Activated naive CD4-positive, alpha-beta T cell treated with anti-CD3 and anti-CD28 coated beads, Interleukin-2, amount 10 ng/mL, durations not matched to agents 7 days and 5 days (primary cell): ENCODE measurements at regions of chr21 and their contacts with region 1.

Region 1: GRCh38 chr21:26717146-26717739 is 128.0 kb downstream of the ADAMTS1 start:
- DNase-seq: no peak
- H3K4me3 Mint-ChIP-seq: no peak overlapping the region
- H3K27ac Mint-ChIP-seq: no peak overlapping the region
- H3K4me1 Mint-ChIP-seq: no peaks in the 10 kb centered on the region
- H3K27me3 Mint-ChIP-seq: no peaks in the 10 kb centered on the region

Region 2: DNA sequence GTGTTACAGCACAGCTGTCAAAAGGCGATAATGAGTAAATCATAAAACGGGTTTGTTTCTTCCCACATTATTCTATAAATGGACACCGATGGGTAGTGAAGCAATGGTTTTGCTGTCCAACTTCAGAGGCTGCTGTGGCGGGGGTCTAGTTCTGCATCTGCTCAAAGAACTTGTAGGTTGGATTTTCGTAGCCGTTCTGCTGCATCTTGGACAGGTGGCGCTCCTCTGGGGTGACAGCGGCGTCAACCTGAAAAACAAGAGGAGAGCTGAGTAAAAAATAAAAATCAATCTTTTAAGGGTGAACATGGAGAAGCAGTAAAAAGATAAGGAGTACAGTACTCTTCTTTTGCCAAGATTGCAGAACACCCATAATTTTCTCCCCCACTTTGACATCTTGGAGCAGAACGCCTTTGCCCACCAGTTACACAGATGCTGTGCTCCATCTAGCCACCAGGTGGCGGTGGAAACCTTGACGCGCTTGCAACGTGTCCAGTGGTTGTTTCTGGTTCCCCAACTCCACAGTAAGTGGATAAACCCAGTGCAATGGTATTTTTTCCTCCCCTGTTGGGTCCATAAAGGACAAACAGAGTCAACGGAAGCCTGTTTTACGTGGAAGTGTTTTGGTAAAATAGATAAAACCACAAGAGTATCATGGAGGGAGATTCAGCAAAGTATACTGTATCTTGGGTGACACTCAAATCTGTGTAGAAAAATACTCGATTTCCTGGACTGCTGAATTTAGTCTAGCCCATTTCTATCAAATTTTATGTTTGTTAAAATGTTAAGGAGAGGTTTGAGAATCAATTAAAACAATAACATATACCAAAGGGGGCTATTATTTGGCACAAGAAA is 835.5 kb before region 1 on chr21:
- CTCF ChIA-PET with region 1: interaction called, 10 read pairs
- DNase-seq: peak; percentile 71
- H3K4me3 Mint-ChIP-seq: no peak overlapping the region
- H3K27ac Mint-ChIP-seq: no peak overlapping the region
- H3K4me1 Mint-ChIP-seq: no peaks in the 10 kb centered on the region
- H3K27me3 Mint-ChIP-seq: no peaks in the 10 kb centered on the region